ENCODE measurements at regions of chr18 and their contacts with region 1.

Region 1: GRCh38 chr18:48934723-48935432 is 15.9 kb downstream of the SMAD7 start:
- DNase-seq: peak; percentile 90 to 97
- ATAC-seq: peak; percentile 94 to 96
- H3K4me3 ChIP-seq: peak overlapping the region; percentile 19 to 39 (median 36)
- H3K27ac ChIP-seq: peak overlapping the region; percentile 88 to 93 (median 89)
- H3K4me1 ChIP-seq: peaks cover 90 to 95% of the 10 kb centered on the region in 2 donors
- H3K27me3 ChIP-seq: no peaks in the 10 kb centered on the region
- CTCF ChIP-seq: no peak
- POLR2A ChIP-seq: peak; percentile 56 to 66

Region 2: GRCh38 chr18:48767090-48767690 is 167.7 kb before region 1 on chr18:
- in situ Hi-C with region 1: no loop called
- intact Hi-C with region 1: loop called (anchors 5 kb)
- DNase-seq: peak; percentile 71 to 91
- ATAC-seq: peak; percentile 76 to 82
- H3K4me3 ChIP-seq: no peak overlapping the region
- H3K27ac ChIP-seq: peak overlapping the region; percentile 78 to 91 (median 88)
- H3K4me1 ChIP-seq: peaks cover 63 to 87% of the 10 kb centered on the region in 2 donors
- H3K27me3 ChIP-seq: no peaks in the 10 kb centered on the region
- CTCF ChIP-seq: no peak
- POLR2A ChIP-seq: peak; percentile 59 to 60

Region 3: DNA sequence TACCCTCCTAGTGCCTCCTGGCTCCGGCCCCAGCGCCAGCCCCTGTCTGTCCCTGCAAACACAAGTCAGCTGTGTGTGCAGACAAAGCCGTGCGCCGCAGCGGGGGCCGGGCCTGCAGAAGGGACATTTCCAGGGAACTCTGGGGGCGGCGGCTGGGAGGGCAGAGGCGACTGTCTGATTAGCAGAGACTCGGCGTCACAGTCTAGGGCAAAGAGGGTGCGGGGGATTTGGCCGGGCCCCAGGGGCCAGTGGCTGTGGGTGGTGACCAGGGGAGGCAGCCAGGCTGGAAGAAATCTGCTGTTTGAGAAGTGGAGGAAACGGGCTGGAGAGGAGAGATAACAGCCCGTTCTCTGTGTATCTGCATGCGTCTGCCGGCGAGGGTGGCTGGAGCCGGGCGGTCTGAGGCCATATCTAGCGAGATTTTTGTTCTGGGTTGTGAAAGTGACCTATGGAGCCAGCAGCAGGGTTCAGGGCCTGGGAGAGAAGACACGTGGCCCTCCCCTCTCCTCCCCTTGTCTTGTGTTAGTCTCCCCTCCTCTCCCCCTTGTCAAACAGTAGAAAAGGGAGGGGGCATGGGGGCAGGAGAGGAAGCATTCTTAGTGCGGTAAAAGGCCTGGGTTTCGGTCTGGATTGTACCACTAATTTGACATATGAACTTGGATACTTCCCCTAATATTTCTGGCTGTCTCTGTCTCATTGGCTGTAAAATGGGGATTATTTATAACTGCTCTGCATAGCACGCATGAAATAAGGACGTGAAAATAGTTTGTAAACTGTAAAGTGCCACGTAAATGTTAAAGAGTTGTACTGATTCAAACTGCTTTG is 153.5 kb before region 1 on chr18:
- in situ Hi-C with region 1: no loop called
- intact Hi-C with region 1: loop called (anchors 5 kb)
- DNase-seq: peak; percentile 31 to 69
- ATAC-seq: peak; percentile 44 to 51
- H3K4me3 ChIP-seq: peak overlapping the region in 2 of 4 donors; percentile 21 to 30
- H3K27ac ChIP-seq: peak overlapping the region; percentile 80 to 92 (median 84)
- H3K4me1 ChIP-seq: peaks cover 38 to 46% of the 10 kb centered on the region in 2 donors
- H3K27me3 ChIP-seq: no peaks in the 10 kb centered on the region
- CTCF ChIP-seq: no peak
- POLR2A ChIP-seq: peak in 1 of 2 donors; percentile 9

Region 4: GRCh38 chr18:48951448-48952286 is 16.8 kb after region 1 on chr18:
- in situ Hi-C with region 1: no loop called
- intact Hi-C with region 1: loop called (anchors 1 kb)
- DNase-seq: peak; percentile 80 to 90
- ATAC-seq: peak; percentile 55 to 60
- H3K4me3 ChIP-seq: peak overlapping the region; percentile 71 to 89 (median 82)
- H3K27ac ChIP-seq: peak overlapping the region; percentile 93 to 100 (median 94)
- H3K4me1 ChIP-seq: peaks cover 44 to 51% of the 10 kb centered on the region in 2 donors
- H3K27me3 ChIP-seq: no peaks in the 10 kb centered on the region
- CTCF ChIP-seq: peak in 3 of 5 experiments; percentile 33 to 37 (median 37)
- POLR2A ChIP-seq: peak; percentile 91 to 93

Region 5: DNA sequence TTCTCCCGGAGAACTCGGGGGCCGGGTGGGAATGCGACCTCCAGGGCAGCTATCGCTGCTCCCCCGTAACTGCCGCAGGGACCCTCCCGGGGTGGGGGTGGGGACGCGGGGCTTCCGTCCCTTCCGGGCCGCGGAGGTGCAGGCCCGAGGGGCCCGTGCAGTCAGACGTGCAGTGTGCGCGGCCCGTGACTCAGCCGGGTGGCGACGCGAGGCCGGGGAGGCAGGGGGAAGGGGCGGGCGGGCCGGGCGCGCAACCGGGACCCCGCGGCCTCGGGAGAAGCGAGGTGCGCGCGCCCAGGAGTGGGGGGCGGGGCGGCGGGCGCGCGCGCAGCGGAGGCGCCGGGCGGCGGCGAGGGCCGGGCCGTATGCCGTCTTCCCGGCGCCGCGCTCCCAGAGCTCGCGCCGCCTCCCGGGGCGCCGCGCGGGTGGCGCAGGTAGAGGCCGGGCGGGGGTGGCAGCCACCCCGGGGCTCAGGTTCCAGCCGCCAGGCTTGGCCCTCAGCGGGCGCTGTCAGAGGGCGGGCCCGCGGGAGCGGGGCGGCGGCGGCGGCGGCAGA is 40.8 kb after region 1 on chr18:
- in situ Hi-C with region 1: no loop called
- intact Hi-C with region 1: loop called (anchors 2 kb)
- DNase-seq: peak; percentile 37 to 75
- ATAC-seq: peak; percentile 79 to 83
- H3K4me3 ChIP-seq: peak overlapping the region; percentile 57 to 95 (median 73)
- H3K27ac ChIP-seq: peak overlapping the region; percentile 82 to 96 (median 87)
- H3K4me1 ChIP-seq: peaks cover 3 to 5% of the 10 kb centered on the region in 2 donors
- H3K27me3 ChIP-seq: no peaks in the 10 kb centered on the region
- CTCF ChIP-seq: no peak
- POLR2A ChIP-seq: peak in 1 of 2 donors; percentile 85

Region 6: DNA sequence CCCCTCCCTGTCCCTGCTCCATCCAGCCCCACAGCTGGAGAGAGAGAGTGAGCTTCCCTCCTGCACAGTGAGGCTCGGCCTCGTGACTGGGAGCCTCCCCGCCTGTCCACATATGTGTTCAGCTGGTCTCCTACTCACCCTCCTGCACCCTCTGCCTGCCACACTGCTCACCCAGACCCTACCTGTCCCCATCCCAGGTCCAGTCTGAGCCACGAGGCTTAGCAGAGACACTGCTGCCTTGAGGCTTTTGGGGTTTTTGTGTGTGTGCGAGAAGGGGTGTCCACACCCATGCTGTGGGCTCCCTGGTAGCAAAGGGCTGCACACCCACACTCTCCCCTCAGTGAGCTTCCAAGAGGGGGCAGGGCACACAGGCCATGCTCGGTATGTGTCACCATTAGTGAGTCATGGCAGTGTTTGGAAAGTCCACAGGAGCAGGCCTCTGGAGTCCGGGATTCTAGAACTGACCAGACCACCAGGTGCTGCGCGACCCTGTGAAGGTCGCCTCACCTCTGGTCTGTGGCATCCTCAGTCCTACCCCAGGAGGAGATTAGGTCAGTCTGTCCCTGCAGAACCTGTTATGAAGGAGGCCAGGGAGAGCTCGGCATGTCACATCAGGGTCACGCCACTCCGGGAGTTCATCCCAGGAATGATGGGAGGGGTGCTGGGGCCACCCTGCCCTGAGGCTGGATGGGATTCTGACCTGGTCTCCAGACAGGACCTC is 55.8 kb after region 1 on chr18:
- in situ Hi-C with region 1: no loop called
- intact Hi-C with region 1: no loop called
- DNase-seq: no peak
- ATAC-seq: peak in 1 of 2 donors; percentile 59
- H3K4me3 ChIP-seq: no peak overlapping the region
- H3K27ac ChIP-seq: no peak overlapping the region
- H3K4me1 ChIP-seq: peaks cover 12 to 13% of the 10 kb centered on the region in 2 donors
- H3K27me3 ChIP-seq: no peaks in the 10 kb centered on the region
- CTCF ChIP-seq: no peak
- POLR2A ChIP-seq: no peak

Region 7: DNA sequence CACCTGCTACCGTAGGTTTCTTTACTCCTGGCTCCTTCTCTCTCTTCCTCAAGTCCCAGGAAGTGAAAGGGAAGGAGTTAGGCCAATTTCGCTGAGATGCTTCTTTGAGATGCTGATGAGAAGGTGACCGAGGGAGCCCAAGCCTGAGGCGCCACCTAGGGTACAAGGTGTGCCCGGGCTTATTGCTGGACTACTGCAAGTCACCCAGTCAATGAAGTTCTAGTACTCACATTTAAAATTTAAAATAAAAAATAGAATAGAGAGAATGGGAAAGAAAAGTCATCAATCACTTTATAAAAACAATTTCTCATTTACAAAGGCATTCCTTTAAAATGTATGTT is 833.1 kb after region 1 on chr18:
- in situ Hi-C with region 1: no loop called
- intact Hi-C with region 1: no loop called
- DNase-seq: peak in 1 of 2 donors; percentile 21
- ATAC-seq: no peak
- H3K4me3 ChIP-seq: no peak overlapping the region
- H3K27ac ChIP-seq: no peak overlapping the region
- H3K4me1 ChIP-seq: no peaks in the 10 kb centered on the region
- H3K27me3 ChIP-seq: no peaks in the 10 kb centered on the region
- CTCF ChIP-seq: peak in 4 of 5 experiments; percentile 15 to 52 (median 26)
- POLR2A ChIP-seq: no peak

Measured in gastrocnemius medialis (tissue), 4 donors.